Left lung (tissue), 14 donors: ENCODE measurements at regions of chr9 and their contacts with region 1.

Region 1: GRCh38 chr9:92716557-92716956 is 46.6 kb upstream of the IPPK start:
- DNase-seq: peak in 1 of 4 donors; percentile 44
- ATAC-seq: peak; percentile 81
- H3K4me3 ChIP-seq: no peak overlapping the region
- H3K27ac ChIP-seq: no peak overlapping the region
- H3K4me1 ChIP-seq: peaks cover 0 to 11% of the 10 kb centered on the region in 2 donors
- H3K27me3 ChIP-seq: no peaks in the 10 kb centered on the region
- CTCF ChIP-seq: peak; percentile 84 to 91

Region 2: DNA sequence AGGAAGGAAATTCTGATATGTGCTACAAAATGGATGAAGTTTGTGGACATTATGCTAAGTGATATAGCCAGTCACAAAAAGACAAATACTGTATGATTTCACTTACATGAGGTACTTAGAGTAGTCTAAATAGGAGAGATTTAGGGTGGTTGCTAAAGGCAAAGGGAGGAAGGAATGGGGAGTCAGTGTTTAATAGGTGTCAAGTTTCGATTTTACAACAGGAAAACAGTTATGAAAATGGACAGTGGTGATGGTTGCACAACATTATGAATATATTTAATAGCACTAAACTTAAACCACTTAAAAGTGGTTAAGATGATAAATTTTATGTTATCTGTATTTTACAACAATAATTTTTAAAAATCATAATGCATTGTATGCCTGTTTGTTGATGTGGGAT is 140.4 kb before region 1 on chr9:
- intact Hi-C with region 1: no loop called
- DNase-seq: no peak
- ATAC-seq: no peak
- H3K4me3 ChIP-seq: no peak overlapping the region
- H3K27ac ChIP-seq: no peak overlapping the region
- H3K4me1 ChIP-seq: peaks cover 0 to 7% of the 10 kb centered on the region in 2 donors
- H3K27me3 ChIP-seq: no peaks in the 10 kb centered on the region
- CTCF ChIP-seq: no peak

Region 3: GRCh38 chr9:92764988-92765936 is 48.7 kb after region 1 on chr9:
- intact Hi-C with region 1: loop called in 1 of 2 experiments (anchors 10 kb)
- DNase-seq: peak; percentile 98 to 99 (median 98)
- ATAC-seq: peak; percentile 97
- H3K4me3 ChIP-seq: peak overlapping the region; percentile 74 to 99
- H3K27ac ChIP-seq: peak overlapping the region; percentile 100
- H3K4me1 ChIP-seq: peaks cover 22 to 58% of the 10 kb centered on the region in 2 donors
- H3K27me3 ChIP-seq: no peaks in the 10 kb centered on the region
- CTCF ChIP-seq: peak; percentile 97

Region 4: DNA sequence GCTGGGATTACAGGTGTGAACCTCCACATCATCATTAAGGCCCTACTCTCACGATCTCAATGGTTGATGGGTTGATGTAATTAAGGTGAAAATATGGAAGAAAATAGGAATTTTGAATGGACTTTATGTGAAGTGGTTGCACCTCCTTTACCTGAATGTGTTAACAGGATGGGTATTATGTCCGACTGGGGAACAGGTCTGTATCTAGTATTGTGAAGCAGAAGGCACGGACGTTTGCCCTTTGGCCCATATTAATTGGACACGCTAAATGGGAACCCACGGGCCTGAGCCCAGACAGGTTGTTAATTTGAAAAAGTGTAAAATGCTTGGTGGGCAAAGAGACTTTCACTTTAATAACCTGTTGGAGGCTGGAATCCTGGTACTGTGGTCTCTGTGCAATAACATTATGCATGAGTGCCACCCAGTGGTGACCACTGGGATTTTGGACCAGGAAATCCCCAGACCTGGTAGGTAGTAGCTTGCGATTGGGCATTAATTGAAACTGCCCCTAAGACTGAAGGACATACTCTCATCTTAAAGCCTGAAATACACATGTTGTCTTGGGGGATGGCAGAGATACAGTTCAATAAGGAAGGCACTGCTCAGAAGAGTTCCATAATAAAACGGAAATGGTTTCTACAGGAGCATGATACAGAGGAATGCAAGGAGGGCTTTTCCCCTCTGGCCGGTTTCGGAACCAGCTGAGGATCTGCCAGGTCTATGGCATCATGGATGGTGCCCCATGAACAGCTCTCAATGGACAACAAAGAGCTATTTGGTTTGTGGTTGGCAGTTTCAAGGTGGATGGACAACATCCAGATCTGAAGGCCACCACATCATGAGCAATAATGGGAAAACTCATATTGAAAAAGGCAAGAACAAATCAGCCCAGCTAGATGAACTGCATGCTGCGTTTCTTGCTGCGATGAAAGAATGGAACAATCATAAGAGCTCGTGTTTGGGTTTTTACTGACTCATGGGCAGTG is 74.3 kb after region 1 on chr9:
- intact Hi-C with region 1: loop called in 1 of 2 experiments (anchors 2 kb)
- DNase-seq: peak in 3 of 4 donors; percentile 64 to 84 (median 70)
- ATAC-seq: peak; percentile 99
- H3K4me3 ChIP-seq: no peak overlapping the region
- H3K27ac ChIP-seq: no peak overlapping the region
- H3K4me1 ChIP-seq: peaks cover 0 to 7% of the 10 kb centered on the region in 2 donors
- H3K27me3 ChIP-seq: peaks cover 0 to 8% of the 10 kb centered on the region in 2 donors
- CTCF ChIP-seq: peak; percentile 86 to 88

Region 5: GRCh38 chr9:93041108-93041802 is 324.7 kb after region 1 on chr9:
- intact Hi-C with region 1: no loop called
- DNase-seq: peak in 1 of 4 donors; percentile 8
- ATAC-seq: no peak
- H3K4me3 ChIP-seq: no peak overlapping the region
- H3K27ac ChIP-seq: no peak overlapping the region
- H3K4me1 ChIP-seq: peaks cover 0 to 42% of the 10 kb centered on the region in 2 donors
- H3K27me3 ChIP-seq: no peaks in the 10 kb centered on the region
- CTCF ChIP-seq: no peak